MCF 10A (cell line): ENCODE measurements at regions of chr5 and their contacts with region 1.

Region 1: GRCh38 chr5:34522599-34523386 is 133.3 kb upstream of the RAI14 start:
- DNase-seq: peak; percentile 85
- H3K4me3 Mint-ChIP-seq: no peak overlapping the region
- H3K27ac Mint-ChIP-seq: no peak overlapping the region
- H3K4me1 Mint-ChIP-seq: peaks cover 20% of the 10 kb centered on the region
- H3K27me3 Mint-ChIP-seq: no peaks in the 10 kb centered on the region
- CTCF ChIP-seq: peak; percentile 65

Region 2: DNA sequence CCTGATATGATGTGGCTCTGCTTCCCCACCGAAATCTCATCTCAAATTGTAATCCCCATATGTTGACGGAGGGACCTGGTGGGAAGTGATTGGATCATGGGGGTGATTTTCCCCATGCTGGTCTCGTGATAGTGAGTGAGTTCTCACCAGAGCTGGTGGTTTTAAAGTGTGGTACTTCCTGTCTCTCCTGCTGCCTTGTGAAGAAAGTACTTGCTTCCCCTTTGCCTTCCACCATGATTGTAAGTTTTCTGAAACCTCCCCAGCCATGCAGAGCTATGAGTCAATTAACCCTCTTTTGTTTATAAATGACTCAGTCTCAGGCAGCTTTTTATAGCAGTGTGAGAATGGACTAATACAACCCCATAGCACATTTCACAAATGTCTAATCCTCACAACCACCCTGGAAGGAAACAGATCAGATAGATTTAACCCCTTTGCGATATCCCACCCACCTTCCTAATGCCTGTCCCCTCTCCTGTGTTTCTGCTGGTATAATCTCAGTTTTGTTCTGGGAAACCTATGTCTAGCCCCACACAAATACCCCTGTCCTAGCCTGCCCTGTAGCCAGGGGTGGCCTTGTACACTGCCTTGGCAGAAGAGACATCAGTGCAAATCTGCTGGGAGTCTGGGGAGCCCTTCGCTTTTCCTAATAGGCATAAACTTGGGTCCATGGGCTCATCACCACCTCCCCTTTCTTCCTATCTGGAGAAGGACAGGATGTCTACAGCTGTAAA is 23.6 kb before region 1 on chr5:
- CTCF ChIA-PET with region 1: interaction called, 17 read pairs
- POLR2A ChIA-PET with region 1: no interaction called
- intact Hi-C with region 1: no loop called
- DNase-seq: peak; percentile 80
- H3K4me3 Mint-ChIP-seq: no peak overlapping the region
- H3K27ac Mint-ChIP-seq: peak overlapping the region; percentile 35
- H3K4me1 Mint-ChIP-seq: peaks cover 19% of the 10 kb centered on the region
- H3K27me3 Mint-ChIP-seq: no peaks in the 10 kb centered on the region
- CTCF ChIP-seq: no peak

Region 3: GRCh38 chr5:34538026-34538672 is 15.4 kb after region 1 on chr5:
- CTCF ChIA-PET with region 1: interaction called, 12 read pairs
- POLR2A ChIA-PET with region 1: no interaction called
- intact Hi-C with region 1: no loop called
- DNase-seq: peak; percentile 54
- H3K4me3 Mint-ChIP-seq: no peak overlapping the region
- H3K27ac Mint-ChIP-seq: no peak overlapping the region
- H3K4me1 Mint-ChIP-seq: peaks cover 26% of the 10 kb centered on the region
- H3K27me3 Mint-ChIP-seq: no peaks in the 10 kb centered on the region
- CTCF ChIP-seq: no peak

Region 4: DNA sequence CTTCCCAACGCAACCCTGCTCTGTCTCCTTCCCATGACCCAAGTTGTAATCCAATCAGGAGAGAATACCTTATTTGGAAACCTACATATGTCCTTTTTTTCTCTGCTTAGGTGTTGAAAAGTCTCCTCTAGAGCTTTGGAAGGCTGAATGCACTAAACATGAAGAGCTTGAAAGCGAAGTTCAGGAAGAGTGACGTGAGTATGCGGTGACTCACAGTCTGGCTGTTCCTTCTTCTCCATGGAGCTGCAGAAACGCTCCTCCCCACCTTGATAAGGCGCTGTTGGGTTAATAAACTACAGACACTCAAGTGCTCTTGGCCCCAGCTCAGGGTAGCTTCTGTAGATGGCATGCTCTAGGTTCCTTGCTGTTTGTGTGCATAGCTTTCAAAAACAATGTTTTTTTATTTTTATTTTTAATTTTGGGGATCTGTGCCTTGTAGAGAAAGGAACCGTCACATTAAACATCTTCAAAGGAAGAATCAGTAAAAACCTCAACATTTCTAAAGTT is 164.0 kb after region 1 on chr5:
- CTCF ChIA-PET with region 1: interaction called, 11 read pairs
- POLR2A ChIA-PET with region 1: interaction called, 5 read pairs
- intact Hi-C with region 1: loop called (anchors 10 kb)
- DNase-seq: peak; percentile 93
- H3K4me3 Mint-ChIP-seq: peak overlapping the region; percentile 10
- H3K27ac Mint-ChIP-seq: peak overlapping the region; percentile 55
- H3K4me1 Mint-ChIP-seq: peaks cover 16% of the 10 kb centered on the region
- H3K27me3 Mint-ChIP-seq: no peaks in the 10 kb centered on the region
- CTCF ChIP-seq: no peak

Region 5: GRCh38 chr5:34838785-34839714 is 316.3 kb after region 1 on chr5 and contains the start of gene TTC23L:
- CTCF ChIA-PET with region 1: interaction called, 11 read pairs
- POLR2A ChIA-PET with region 1: interaction called, 6 read pairs
- intact Hi-C with region 1: loop called (anchors 10 kb)
- DNase-seq: peak; percentile 89
- H3K4me3 Mint-ChIP-seq: peak within 1 kb of the TSS; percentile 88
- H3K27ac Mint-ChIP-seq: peak within 1 kb of the TSS; percentile 92
- H3K4me1 Mint-ChIP-seq: peaks cover 11% of the 10 kb centered on the region
- H3K27me3 Mint-ChIP-seq: no peaks in the 10 kb centered on the region
- CTCF ChIP-seq: no peak
- total RNA-seq, gene TTC23L: 0.14 and 0.69 TPM in 2 replicates